Tibial artery (tissue), 4 donors: ENCODE measurements at regions of chr18 and their contacts with region 1.

Region 1: GRCh38 chr18:6069103-6069502 is 173.8 kb upstream of the TMEM200C start:
- DNase-seq: no peak
- H3K4me3 ChIP-seq: no peak overlapping the region
- H3K27ac ChIP-seq: no peak overlapping the region
- H3K4me1 ChIP-seq: no peaks in the 10 kb centered on the region
- H3K27me3 ChIP-seq: no peaks in the 10 kb centered on the region
- CTCF ChIP-seq: no peak

Region 2: GRCh38 chr18:6397931-6398566 is 328.9 kb after region 1 on chr18:
- intact Hi-C with region 1: loop called (anchors 2 kb)
- DNase-seq: no peak
- H3K4me3 ChIP-seq: no peak overlapping the region
- H3K27ac ChIP-seq: no peak overlapping the region
- H3K4me1 ChIP-seq: no peaks in the 10 kb centered on the region
- H3K27me3 ChIP-seq: no peaks in the 10 kb centered on the region
- CTCF ChIP-seq: no peak